ENCODE measurements at regions of chr4 and their contacts with region 1.

Region 1: GRCh38 chr4:156158747-156159146 is 205.1 kb upstream of the CTSO start:
- DNase-seq: no peak
- ATAC-seq: no peak
- H3K4me3 ChIP-seq: no peak overlapping the region
- H3K27ac ChIP-seq: no peak overlapping the region
- H3K4me1 ChIP-seq: no peaks in the 10 kb centered on the region
- H3K27me3 ChIP-seq: no peaks in the 10 kb centered on the region
- CTCF ChIP-seq: no peak
- POLR2A ChIP-seq: no peak
- RAD21 ChIP-seq: no peak

Region 2: DNA sequence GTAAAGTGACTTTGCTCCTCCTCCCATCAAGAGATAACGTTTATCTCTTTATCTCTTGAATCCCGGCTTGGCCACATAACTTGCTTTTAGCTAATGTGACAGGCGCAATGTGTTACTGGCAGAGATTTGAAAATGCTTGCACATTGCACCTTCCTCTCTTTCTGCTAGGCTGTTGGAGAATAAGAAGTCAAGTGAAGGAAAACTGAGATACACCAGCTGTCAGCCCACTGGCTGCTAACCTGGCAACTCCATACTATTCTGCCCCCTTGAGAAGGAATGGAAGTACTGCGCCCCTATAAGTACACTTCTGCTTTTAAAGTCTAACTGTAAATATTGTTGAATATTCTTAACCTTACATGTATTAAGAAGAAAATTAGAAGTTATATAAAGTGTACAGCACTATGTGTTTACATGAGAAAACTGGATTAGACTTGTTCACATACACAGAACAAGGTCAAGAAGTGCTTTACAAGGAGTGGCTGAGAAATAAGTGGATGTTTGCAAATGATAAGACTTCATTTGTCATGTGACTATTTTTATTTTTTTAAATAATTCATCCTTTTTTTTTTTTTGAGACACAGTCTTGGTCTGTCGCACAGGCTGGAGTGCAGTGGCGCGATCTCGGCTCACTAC is 219.4 kb after region 1 on chr4:
- CTCF ChIA-PET with region 1: no interaction called
- POLR2A ChIA-PET with region 1: no interaction called
- RAD21 ChIA-PET with region 1: no interaction called
- intact Hi-C with region 1: loop called (anchors 5 kb)
- DNase-seq: peak; percentile 24
- ATAC-seq: peak; percentile 69
- H3K4me3 ChIP-seq: no peak overlapping the region
- H3K27ac ChIP-seq: no peak overlapping the region
- H3K4me1 ChIP-seq: peaks cover 10% of the 10 kb centered on the region in 2 experiments; a peak in 2 of 4 replicates
- H3K27me3 ChIP-seq: no peaks in the 10 kb centered on the region
- CTCF ChIP-seq: peak; percentile 61 to 74 (median 74); a peak in 5 of 6 replicates
- POLR2A ChIP-seq: no peak
- RAD21 ChIP-seq: peak; percentile 73